Mammary epithelial cell (primary cell): ENCODE measurements at regions of chr15 and their contacts with region 1.

Region 1: DNA sequence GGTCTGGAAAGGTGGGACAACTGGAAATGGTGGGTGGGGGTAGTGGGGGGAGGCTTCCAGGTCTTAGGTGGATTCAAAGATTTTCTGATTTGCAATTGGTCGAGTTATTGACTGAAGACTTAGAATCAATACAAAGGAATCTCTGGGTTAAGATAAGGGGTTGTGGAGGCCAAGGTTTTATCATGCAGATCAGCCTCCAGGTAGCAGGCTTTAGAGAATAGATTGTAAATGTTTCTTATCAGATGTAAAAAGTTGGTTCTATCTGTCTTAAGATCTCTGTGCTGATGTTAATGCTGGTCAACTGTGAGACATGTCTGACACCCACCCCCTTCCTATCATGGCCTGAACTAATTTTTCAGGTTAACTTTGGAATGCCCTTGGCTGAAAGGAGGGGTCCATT is 112.0 kb downstream of the ANXA2 start:
- DNase-seq: no peak
- H3K4me3 ChIP-seq: no peak overlapping the region
- H3K27ac ChIP-seq: no peak overlapping the region
- H3K4me1 ChIP-seq: no peaks in the 10 kb centered on the region
- H3K27me3 ChIP-seq: peaks cover 3% of the 10 kb centered on the region
- CTCF ChIP-seq: no peak

Region 2: GRCh38 chr15:60228101-60228500 is 57.6 kb before region 1 on chr15:
- CTCF ChIA-PET with region 1: no interaction called
- dilution Hi-C with region 1: loop called (anchors 5 kb)
- in situ Hi-C with region 1: no loop called
- intact Hi-C with region 1: no loop called
- DNase-seq: no peak
- H3K4me3 ChIP-seq: no peak overlapping the region
- H3K27ac ChIP-seq: no peak overlapping the region
- H3K4me1 ChIP-seq: no peaks in the 10 kb centered on the region
- H3K27me3 ChIP-seq: peaks cover 11% of the 10 kb centered on the region
- CTCF ChIP-seq: no peak